Naive thymus-derived CD4-positive, alpha-beta T cell (primary cell): ENCODE measurements at regions of chr16 and their contacts with region 1.

Region 1: GRCh38 chr16:81314603-81315270 is at the start of gene GAN:
- DNase-seq: peak; percentile 83 to 96 (median 93)
- ATAC-seq: peak; percentile 99
- H3K4me3 ChIP-seq: peak within 1 kb of the TSS; percentile 89
- H3K4me3 Mint-ChIP-seq: peak within 1 kb of the TSS; percentile 89 to 99 (median 96)
- H3K27ac ChIP-seq: peak within 1 kb of the TSS; percentile 78
- H3K27ac Mint-ChIP-seq: peak within 1 kb of the TSS; percentile 85 to 98 (median 94)
- H3K4me1 ChIP-seq: peaks cover 15 to 17% of the 10 kb centered on the region in 2 donors
- H3K4me1 Mint-ChIP-seq: peaks cover 37 to 70% (median 59%) of the 10 kb centered on the region in 7 donors
- H3K27me3 ChIP-seq: no peaks in the 10 kb centered on the region
- H3K27me3 Mint-ChIP-seq: no peaks in the 10 kb centered on the region
- total RNA-seq, gene GAN: 5.1 to 11.3 (median 7.9) TPM

Region 2: GRCh38 chr16:81035398-81035974 is 279.3 kb before region 1 on chr16 and contains the start of gene ATMIN:
- CTCF ChIA-PET with region 1: no interaction called
- POLR2A ChIA-PET with region 1: interaction called, 3 read pairs
- intact Hi-C with region 1: loop called (anchors 1 kb)
- DNase-seq: peak; percentile 80 to 96 (median 90)
- ATAC-seq: peak; percentile 100
- H3K4me3 ChIP-seq: peak within 1 kb of the TSS; percentile 52
- H3K4me3 Mint-ChIP-seq: peak within 1 kb of the TSS; percentile 79 to 92 (median 89)
- H3K27ac ChIP-seq: peak within 1 kb of the TSS; percentile 69
- H3K27ac Mint-ChIP-seq: peak within 1 kb of the TSS; percentile 29 to 87 (median 77)
- H3K4me1 ChIP-seq: peaks cover 20 to 24% of the 10 kb centered on the region in 2 donors
- H3K4me1 Mint-ChIP-seq: peaks cover 16 to 44% (median 39%) of the 10 kb centered on the region in 7 donors
- H3K27me3 ChIP-seq: no peaks in the 10 kb centered on the region
- H3K27me3 Mint-ChIP-seq: no peaks in the 10 kb centered on the region
- total RNA-seq, gene ATMIN: 29.1 to 46.9 (median 35.3) TPM

Region 3: DNA sequence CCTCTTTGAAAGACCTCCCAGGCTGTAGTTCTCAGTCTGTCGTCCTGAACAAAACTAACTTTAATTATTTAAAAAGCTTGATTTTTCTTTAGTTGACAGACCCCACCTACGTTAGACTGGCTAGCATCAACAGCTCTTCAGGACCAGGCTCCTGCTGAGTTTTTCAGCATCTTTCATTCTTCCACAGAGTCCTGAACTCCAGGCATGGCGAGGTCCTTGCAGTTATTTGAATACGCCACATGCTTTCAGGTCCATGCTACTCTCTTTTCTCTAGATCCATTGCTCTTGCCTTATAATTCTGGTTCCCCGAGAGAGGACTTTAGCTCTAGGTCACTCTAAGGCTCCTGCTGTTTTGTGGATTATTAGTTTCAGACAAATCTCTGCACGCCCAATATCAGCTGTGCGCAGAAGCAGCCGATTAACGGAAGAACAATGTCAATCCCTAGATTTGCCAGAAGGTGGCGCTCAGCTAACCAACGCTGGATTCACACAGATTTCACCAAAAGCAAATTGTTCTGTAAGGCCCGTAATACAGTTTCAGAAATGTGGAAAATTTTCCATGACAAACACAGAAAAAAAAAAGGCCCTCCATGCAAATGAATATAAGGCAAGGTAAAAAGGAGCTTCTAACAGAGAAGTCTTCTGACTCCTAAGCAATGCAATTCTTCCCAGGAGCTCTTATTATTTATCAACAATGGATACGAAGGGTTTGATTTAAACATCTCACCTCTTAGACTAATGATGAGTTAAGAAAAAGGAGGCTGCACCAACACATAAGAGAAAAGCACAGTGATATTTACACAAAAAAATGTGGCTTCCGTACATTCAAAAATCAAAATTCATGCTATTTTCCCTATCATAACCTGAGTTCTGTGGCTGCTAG is 109.7 kb before region 1 on chr16:
- CTCF ChIA-PET with region 1: interaction called, 3 read pairs
- POLR2A ChIA-PET with region 1: no interaction called
- intact Hi-C with region 1: loop called in 1 of 2 experiments (anchors 10 kb)
- DNase-seq: peak in 5 of 9 donors; percentile 10 to 43 (median 33)
- ATAC-seq: peak; percentile 45
- H3K4me3 ChIP-seq: no peak overlapping the region
- H3K4me3 Mint-ChIP-seq: no peak overlapping the region
- H3K27ac ChIP-seq: no peak overlapping the region
- H3K27ac Mint-ChIP-seq: no peak overlapping the region
- H3K4me1 ChIP-seq: no peaks in the 10 kb centered on the region
- H3K4me1 Mint-ChIP-seq: peaks cover 0 to 7% (median 4%) of the 10 kb centered on the region in 7 donors
- H3K27me3 ChIP-seq: no peaks in the 10 kb centered on the region
- H3K27me3 Mint-ChIP-seq: peaks cover 10 to 19% (median 17%) of the 10 kb centered on the region in 5 donors

Region 4: DNA sequence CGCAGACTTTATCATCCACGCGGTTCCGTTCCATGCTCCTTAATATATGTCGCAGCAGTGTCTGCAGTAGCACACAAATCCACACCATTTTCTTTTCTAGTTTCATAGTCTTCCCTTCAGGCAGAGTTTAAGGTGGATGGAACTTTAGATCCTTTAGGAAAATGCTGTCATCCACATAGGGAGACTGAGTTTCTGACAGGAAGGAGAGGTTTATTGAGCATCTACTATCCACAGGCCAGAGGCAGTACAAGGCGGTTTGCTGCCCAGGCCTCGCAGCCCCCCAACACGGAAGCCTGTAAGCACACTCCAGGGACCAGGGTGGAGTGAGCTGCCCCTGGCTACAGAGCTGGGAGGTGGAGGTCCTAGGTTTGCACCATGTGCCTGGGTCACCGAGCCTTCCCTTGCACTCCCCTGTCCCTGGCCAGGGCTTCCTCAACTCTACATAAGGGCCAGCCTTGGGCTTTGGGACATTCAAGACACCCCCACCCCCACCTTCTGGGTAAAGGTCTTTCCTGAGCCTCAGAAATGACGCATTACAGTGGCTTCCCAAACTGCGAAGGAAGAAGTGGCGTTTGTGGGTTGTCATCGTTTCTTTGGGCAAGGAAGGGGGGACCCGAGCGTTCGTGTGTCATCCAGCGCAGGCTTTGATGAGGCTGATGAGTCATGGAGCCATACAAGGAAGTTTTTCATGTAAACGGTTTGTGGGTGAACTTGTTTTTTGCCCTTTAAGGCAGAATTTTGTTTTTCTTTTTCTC is 317.8 kb after region 1 on chr16:
- CTCF ChIA-PET with region 1: no interaction called
- POLR2A ChIA-PET with region 1: no interaction called
- intact Hi-C with region 1: loop called in 1 of 2 experiments (anchors 1 kb)
- DNase-seq: peak; percentile 20 to 81 (median 73)
- ATAC-seq: peak; percentile 91
- H3K4me3 ChIP-seq: no peak overlapping the region
- H3K4me3 Mint-ChIP-seq: peak overlapping the region in 8 of 10 donors; percentile 0 to 71 (median 52)
- H3K27ac ChIP-seq: peak overlapping the region; percentile 56
- H3K27ac Mint-ChIP-seq: peak overlapping the region; percentile 53 to 99 (median 90)
- H3K4me1 ChIP-seq: peaks cover 18 to 20% of the 10 kb centered on the region in 2 donors
- H3K4me1 Mint-ChIP-seq: peaks cover 18 to 72% (median 52%) of the 10 kb centered on the region in 7 donors
- H3K27me3 ChIP-seq: no peaks in the 10 kb centered on the region
- H3K27me3 Mint-ChIP-seq: no peaks in the 10 kb centered on the region

Region 5: DNA sequence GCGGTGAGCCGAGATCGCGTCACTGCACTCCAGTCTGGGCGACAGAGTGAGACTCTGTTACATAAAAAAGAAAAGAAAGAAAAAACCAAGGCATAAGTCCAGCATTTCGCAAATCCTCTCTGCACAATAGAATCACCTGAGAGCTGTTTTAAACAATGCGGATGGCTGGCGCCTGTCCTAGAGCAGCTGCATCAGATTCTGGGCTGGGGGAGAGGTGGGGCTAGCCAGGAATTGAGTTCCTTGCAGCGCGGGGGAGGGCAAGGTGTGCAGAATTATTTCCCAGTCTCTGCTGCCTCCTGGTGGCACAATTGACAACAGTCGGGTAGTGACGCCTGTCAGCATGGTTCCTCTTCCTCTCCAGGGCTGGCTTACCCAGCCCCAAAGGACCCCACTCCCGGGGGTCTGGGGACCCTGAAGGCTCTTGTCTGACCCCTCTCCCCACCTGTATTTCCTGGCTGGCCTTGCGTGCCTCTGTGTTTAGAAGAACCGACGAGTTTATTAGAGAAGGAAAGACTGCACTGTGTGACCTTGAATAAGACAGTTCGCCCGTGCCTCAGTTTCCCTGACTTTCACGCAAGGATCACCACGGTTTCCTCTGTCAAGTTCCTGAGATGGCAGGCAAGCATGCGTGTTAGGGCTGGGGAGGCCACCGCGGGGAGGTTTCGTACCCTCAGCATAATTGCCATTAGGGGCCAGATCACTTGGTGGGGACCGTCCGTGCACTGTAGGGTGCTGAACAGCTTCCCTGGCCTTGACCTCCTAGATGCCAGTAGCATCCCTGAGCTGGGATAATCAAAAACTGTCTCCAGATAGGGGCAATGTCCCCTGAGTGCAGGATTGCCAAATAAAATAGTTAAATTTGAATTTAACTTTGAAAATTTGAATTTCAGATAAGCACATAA is 423.4 kb after region 1 on chr16:
- CTCF ChIA-PET with region 1: no interaction called
- POLR2A ChIA-PET with region 1: interaction called, 3 read pairs
- intact Hi-C with region 1: loop called in 1 of 2 experiments (anchors 2 kb)
- DNase-seq: peak; percentile 69 to 88 (median 83)
- ATAC-seq: peak; percentile 95
- H3K4me3 ChIP-seq: peak overlapping the region; percentile 28
- H3K4me3 Mint-ChIP-seq: peak overlapping the region; percentile 67 to 81 (median 76)
- H3K27ac ChIP-seq: no peak overlapping the region
- H3K27ac Mint-ChIP-seq: peak overlapping the region in 6 of 9 donors; percentile 34 to 75 (median 42)
- H3K4me1 ChIP-seq: peaks cover 0 to 3% of the 10 kb centered on the region in 2 donors
- H3K4me1 Mint-ChIP-seq: peaks cover 0 to 18% (median 5%) of the 10 kb centered on the region in 7 donors
- H3K27me3 ChIP-seq: no peaks in the 10 kb centered on the region
- H3K27me3 Mint-ChIP-seq: peaks cover 0 to 2% (median 0%) of the 10 kb centered on the region in 5 donors

Region 6: GRCh38 chr16:82169861-82170845 is 855.4 kb after region 1 on chr16 and contains the start of gene MPHOSPH6:
- CTCF ChIA-PET with region 1: no interaction called
- POLR2A ChIA-PET with region 1: interaction called, 3 read pairs
- intact Hi-C with region 1: loop called in 1 of 2 experiments (anchors 1 kb)
- DNase-seq: peak; percentile 84 to 91 (median 88)
- ATAC-seq: peak; percentile 98
- H3K4me3 ChIP-seq: peak within 1 kb of the TSS; percentile 77
- H3K4me3 Mint-ChIP-seq: peak within 1 kb of the TSS; percentile 80 to 97 (median 95)
- H3K27ac ChIP-seq: peak within 1 kb of the TSS; percentile 84
- H3K27ac Mint-ChIP-seq: peak within 1 kb of the TSS; percentile 78 to 98 (median 96)
- H3K4me1 ChIP-seq: peaks cover 9 to 12% of the 10 kb centered on the region in 2 donors
- H3K4me1 Mint-ChIP-seq: peaks cover 18 to 38% (median 32%) of the 10 kb centered on the region in 7 donors
- H3K27me3 ChIP-seq: peaks cover 6% of the 10 kb centered on the region in 2 donors
- H3K27me3 Mint-ChIP-seq: peaks cover 8 to 41% (median 28%) of the 10 kb centered on the region in 5 donors
- total RNA-seq, gene MPHOSPH6: 15.6 to 30.4 (median 23.3) TPM